ENCODE measurements at regions of chr10 and their contacts with region 1.

Region 1: GRCh38 chr10:47024399-47025252 is 113.4 kb downstream of the PTPN20 start:
- DNase-seq: peak; percentile 82
- CTCF ChIP-seq: peak; percentile 82

Region 2: GRCh38 chr10:47038851-47039561 is 14.4 kb after region 1 on chr10:
- CTCF ChIA-PET with region 1: interaction called, 19 read pairs
- POLR2A ChIA-PET with region 1: no interaction called
- DNase-seq: no peak
- CTCF ChIP-seq: no peak

Region 3: GRCh38 chr10:47104786-47105385 is 80.3 kb after region 1 on chr10:
- CTCF ChIA-PET with region 1: no interaction called
- POLR2A ChIA-PET with region 1: no interaction called
- DNase-seq: no peak
- CTCF ChIP-seq: no peak

Measured in GM10248 (cell line).